GM23248 (cell line): ENCODE measurements at regions of chr1 and their contacts with region 1.

Region 1: DNA sequence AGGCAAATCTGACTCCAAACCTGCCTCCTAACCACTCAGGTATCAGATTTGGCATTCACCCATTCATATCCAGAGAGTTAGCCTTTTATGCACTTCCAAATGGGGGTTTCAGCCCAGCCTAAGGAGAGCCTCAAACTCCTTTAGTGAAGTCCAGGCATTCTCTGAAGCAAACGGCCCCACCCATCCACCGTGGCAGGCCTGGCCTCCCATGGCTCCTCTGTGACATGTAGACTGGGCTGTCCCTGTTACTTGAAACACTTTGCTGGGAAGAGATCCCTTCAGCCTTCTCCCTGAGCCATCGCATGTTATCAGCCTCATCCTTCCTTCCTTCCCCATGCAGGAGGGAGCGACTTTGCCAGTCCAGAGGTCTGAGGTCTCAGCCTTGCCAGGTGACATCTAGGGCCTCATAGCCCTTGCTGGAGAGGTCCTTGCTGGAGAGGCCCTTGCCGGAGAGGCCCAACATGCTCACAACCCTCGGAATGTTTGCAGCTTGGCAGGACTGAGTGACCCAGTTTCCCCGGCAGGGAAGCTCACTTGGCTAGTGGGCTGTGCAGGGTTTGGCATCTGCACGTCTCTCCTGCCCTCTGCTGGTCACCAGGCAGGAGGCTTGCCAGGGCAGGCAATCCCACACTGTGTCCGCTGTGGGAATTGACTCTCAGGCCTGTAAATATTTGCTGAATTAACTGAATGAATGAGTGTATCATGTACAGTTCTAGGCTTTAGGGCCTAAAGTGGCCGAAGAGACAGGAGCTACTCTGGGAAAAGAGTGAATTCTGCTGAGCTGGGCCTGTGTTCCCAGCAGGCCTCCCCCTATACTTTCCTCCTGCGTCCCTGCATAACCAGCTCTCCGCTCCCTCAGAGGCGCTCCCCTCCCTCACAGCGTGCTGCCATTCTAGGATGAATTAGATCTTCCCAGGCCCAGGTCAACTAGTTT is 26.7 kb upstream of the RBM15 start:
- DNase-seq: peak; percentile 93
- H3K4me3 ChIP-seq: no peak overlapping the region
- H3K27ac ChIP-seq: no peak overlapping the region
- H3K4me1 ChIP-seq: peaks cover 46% of the 10 kb centered on the region
- H3K27me3 ChIP-seq: no peaks in the 10 kb centered on the region

Region 2: DNA sequence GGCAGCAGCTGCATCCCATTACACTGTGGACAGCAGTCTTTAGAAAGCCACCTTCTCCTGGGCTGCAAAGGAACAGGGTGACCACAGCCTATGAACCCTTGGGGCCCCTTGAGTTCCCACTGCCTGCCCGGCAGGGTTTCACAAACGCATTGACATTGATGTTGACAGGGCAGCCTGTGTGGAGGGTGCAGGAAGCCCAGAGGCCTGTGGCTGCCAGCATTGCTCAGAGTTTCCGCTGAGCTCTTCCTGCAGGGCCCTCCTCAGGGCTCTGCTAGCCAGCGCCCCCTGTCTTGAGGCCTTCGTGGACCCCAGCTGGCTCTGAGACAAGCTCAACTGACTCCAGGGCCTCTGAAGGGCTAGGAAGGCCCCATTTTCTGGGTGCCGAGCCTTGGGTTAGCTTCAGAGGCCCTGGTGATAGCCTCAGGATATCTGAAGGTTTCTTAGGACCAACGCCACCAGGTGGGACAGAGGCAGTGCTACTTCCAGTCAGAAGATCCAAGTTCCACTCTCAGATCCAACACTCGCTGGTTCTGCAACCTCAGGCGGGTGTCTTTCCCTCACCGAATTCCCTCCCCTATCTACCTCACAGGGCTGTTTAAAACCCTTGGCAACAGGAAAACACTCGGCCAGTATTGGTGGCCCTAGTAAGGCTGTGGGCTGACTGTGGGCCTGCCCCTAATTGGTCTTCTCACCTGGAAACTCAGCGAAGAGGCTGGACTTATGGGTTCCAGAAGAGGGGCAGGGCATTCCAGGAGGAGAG is 521.5 kb before region 1 on chr1:
- in situ Hi-C with region 1: no loop called
- DNase-seq: peak; percentile 72
- H3K4me3 ChIP-seq: no peak overlapping the region
- H3K27ac ChIP-seq: no peak overlapping the region
- H3K4me1 ChIP-seq: peaks cover 31% of the 10 kb centered on the region
- H3K27me3 ChIP-seq: no peaks in the 10 kb centered on the region

Region 3: GRCh38 chr1:110176299-110176956 is 136.0 kb before region 1 on chr1:
- in situ Hi-C with region 1: no loop called
- DNase-seq: no peak
- H3K4me3 ChIP-seq: no peak overlapping the region
- H3K27ac ChIP-seq: no peak overlapping the region
- H3K4me1 ChIP-seq: no peaks in the 10 kb centered on the region
- H3K27me3 ChIP-seq: no peaks in the 10 kb centered on the region

Region 4: GRCh38 chr1:110188035-110188618 is 124.3 kb before region 1 on chr1:
- in situ Hi-C with region 1: no loop called
- DNase-seq: peak; percentile 90
- H3K4me3 ChIP-seq: no peak overlapping the region
- H3K27ac ChIP-seq: peak overlapping the region; percentile 55
- H3K4me1 ChIP-seq: peaks cover 25% of the 10 kb centered on the region
- H3K27me3 ChIP-seq: no peaks in the 10 kb centered on the region

Region 5: GRCh38 chr1:110203021-110203661 is 109.3 kb before region 1 on chr1:
- in situ Hi-C with region 1: loop called (anchors 5 kb)
- DNase-seq: peak; percentile 68
- H3K4me3 ChIP-seq: no peak overlapping the region
- H3K27ac ChIP-seq: peak overlapping the region; percentile 60
- H3K4me1 ChIP-seq: peaks cover 12% of the 10 kb centered on the region
- H3K27me3 ChIP-seq: no peaks in the 10 kb centered on the region